ENCODE measurements at regions of chr10 and their contacts with region 1.

Region 1: DNA sequence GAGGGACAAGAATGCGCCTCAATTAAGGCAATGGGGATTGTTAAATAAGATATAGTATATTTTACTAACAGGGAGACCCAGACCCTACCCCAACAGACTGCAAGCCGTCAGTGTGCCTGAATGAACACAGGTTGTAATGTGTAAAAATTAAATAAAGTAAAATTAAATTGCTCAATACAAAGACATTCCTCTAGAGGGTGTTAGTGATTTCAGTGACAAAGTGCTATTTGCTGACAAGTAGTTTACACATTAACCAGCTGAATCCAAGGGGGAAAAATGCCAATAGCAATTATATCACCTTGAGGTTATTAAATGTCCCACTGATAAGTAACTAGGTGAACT is 110.5 kb downstream of the EBF3 start:
- DNase-seq: peak; percentile 5
- H3K4me3 Mint-ChIP-seq: no peak overlapping the region
- H3K27ac Mint-ChIP-seq: no peak overlapping the region
- H3K4me1 Mint-ChIP-seq: no peaks in the 10 kb centered on the region
- H3K27me3 Mint-ChIP-seq: no peaks in the 10 kb centered on the region
- CTCF ChIP-seq: peak; percentile 13

Region 2: DNA sequence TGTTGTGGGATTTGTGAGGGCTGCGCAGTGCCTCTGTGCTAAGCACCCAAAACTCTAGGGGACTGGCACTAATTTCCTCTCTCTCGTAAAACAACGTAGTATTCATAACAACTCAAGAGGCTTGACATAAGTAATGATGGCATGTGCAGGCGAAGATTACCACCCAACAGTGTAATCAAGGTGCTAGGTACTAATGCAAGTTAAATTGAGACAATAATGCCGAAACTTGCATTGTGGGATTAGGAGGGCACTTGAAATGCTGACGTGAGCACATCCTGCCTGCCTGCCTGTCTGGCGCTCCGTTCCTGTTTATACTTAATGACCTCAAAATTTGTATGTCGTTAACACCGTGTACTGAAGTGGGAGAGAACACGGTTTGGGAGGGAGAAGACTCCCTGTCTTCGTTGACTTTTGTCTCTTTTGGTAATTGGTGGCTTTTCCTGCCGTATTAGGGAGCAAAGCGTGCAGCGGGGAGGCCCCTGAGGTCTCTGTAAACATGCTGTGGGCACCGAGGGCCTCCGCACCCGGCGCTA is 247.5 kb before region 1 on chr10:
- CTCF ChIA-PET with region 1: no interaction called
- POLR2A ChIA-PET with region 1: no interaction called
- intact Hi-C with region 1: no loop called
- DNase-seq: no peak
- H3K4me3 Mint-ChIP-seq: no peak overlapping the region
- H3K27ac Mint-ChIP-seq: no peak overlapping the region
- H3K4me1 Mint-ChIP-seq: no peaks in the 10 kb centered on the region
- H3K27me3 Mint-ChIP-seq: no peaks in the 10 kb centered on the region
- CTCF ChIP-seq: no peak

Region 3: GRCh38 chr10:129808092-129808983 is 45.2 kb before region 1 on chr10:
- CTCF ChIA-PET with region 1: no interaction called
- POLR2A ChIA-PET with region 1: no interaction called
- intact Hi-C with region 1: no loop called
- DNase-seq: no peak
- H3K4me3 Mint-ChIP-seq: no peak overlapping the region
- H3K27ac Mint-ChIP-seq: no peak overlapping the region
- H3K4me1 Mint-ChIP-seq: no peaks in the 10 kb centered on the region
- H3K27me3 Mint-ChIP-seq: no peaks in the 10 kb centered on the region
- CTCF ChIP-seq: no peak

Region 4: DNA sequence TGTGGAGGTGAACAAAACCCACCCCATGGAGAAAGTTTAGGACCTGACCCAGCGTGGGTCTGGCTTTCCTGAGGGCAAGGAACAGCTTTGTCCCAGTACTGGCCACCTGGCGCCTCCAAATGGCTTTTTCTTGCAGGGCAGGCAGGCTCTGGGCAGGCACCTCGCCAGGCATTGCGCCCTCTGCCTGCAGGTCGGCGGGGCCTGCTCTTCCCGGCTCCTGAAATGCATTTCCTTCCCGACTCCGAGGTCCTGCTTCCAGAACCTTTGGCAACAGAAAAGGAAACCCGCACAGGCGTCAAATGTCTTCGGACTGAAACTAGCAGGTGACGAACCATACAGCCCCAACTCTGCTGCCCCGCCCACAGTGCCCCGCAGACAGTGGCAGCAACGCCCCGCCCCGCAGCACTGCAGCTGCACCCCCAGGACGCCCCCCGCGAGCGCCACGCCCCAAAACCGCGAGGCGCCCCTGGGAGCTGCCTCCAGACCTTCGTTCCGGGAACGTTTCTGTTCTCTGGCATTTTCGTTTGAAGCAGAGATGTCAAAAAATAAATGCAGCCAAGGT is 191.6 kb after region 1 on chr10:
- CTCF ChIA-PET with region 1: interaction called, 4 read pairs
- POLR2A ChIA-PET with region 1: no interaction called
- intact Hi-C with region 1: loop called (anchors 10 kb)
- DNase-seq: peak; percentile 32
- H3K4me3 Mint-ChIP-seq: no peak overlapping the region
- H3K27ac Mint-ChIP-seq: no peak overlapping the region
- H3K4me1 Mint-ChIP-seq: peaks cover 5% of the 10 kb centered on the region
- H3K27me3 Mint-ChIP-seq: no peaks in the 10 kb centered on the region
- CTCF ChIP-seq: peak; percentile 6

Region 5: GRCh38 chr10:130074639-130075038 is 221.1 kb after region 1 on chr10:
- CTCF ChIA-PET with region 1: no interaction called
- POLR2A ChIA-PET with region 1: no interaction called
- intact Hi-C with region 1: loop called (anchors 1 kb)
- DNase-seq: no peak
- H3K4me3 Mint-ChIP-seq: no peak overlapping the region
- H3K27ac Mint-ChIP-seq: no peak overlapping the region
- H3K4me1 Mint-ChIP-seq: no peaks in the 10 kb centered on the region
- H3K27me3 Mint-ChIP-seq: no peaks in the 10 kb centered on the region
- CTCF ChIP-seq: no peak

Region 6: DNA sequence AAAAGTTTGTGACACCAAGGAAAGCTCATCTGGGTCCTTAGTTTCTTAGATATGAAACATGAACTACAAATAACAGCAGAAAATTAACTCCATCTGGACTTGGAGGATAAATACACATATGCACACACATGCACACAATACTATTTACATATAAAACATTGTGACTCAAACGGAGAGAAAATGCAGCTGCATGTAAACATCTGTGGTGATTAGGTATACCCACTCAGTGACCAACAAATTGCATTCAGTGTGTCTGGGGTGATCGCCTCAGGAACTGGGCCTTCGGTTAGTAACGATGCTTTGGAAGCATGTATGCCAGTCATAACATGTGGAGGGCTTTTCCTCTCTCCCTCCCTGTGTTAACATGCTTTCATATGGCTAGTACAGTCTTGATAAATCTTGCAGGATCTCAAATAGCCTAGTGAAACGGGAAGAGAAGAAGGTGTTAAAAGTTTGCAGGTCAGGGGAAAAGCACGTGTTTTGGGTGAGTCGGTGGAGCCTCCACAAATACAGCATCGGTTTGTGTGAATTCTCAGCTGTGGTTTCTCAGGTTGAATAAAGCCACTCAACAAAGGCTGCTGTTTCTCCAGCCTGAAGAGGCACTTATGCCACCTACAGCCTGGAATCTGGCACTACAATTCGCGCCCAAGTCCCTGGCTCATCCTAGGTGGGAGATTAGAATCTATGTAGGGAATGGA is 274.0 kb after region 1 on chr10:
- CTCF ChIA-PET with region 1: interaction called, 31 read pairs
- POLR2A ChIA-PET with region 1: interaction called, 3 read pairs
- intact Hi-C with region 1: loop called (anchors 2 kb)
- DNase-seq: peak; percentile 73
- H3K4me3 Mint-ChIP-seq: no peak overlapping the region
- H3K27ac Mint-ChIP-seq: no peak overlapping the region
- H3K4me1 Mint-ChIP-seq: peaks cover 6% of the 10 kb centered on the region
- H3K27me3 Mint-ChIP-seq: no peaks in the 10 kb centered on the region
- CTCF ChIP-seq: peak; percentile 87

Region 7: GRCh38 chr10:130179640-130180039 is 326.1 kb after region 1 on chr10:
- CTCF ChIA-PET with region 1: interaction called, 10 read pairs
- POLR2A ChIA-PET with region 1: no interaction called
- intact Hi-C with region 1: no loop called
- DNase-seq: peak; percentile 51
- H3K4me3 Mint-ChIP-seq: no peak overlapping the region
- H3K27ac Mint-ChIP-seq: no peak overlapping the region
- H3K4me1 Mint-ChIP-seq: no peaks in the 10 kb centered on the region
- H3K27me3 Mint-ChIP-seq: no peaks in the 10 kb centered on the region
- CTCF ChIP-seq: peak; percentile 24